ENCODE measurements at regions of chr5 and their contacts with region 1.

Region 1: GRCh38 chr5:159915904-159916840 is at the start of gene ADRA1B:
- DNase-seq: peak; percentile 86 to 94
- ATAC-seq: peak; percentile 87
- H3K4me3 ChIP-seq: peak within 1 kb of the TSS; percentile 51 to 80
- H3K27ac ChIP-seq: peak within 1 kb of the TSS; percentile 94 to 96
- H3K4me1 ChIP-seq: peaks cover 9 to 11% of the 10 kb centered on the region in 2 donors
- H3K27me3 ChIP-seq: no peaks in the 10 kb centered on the region
- total RNA-seq, gene ADRA1B: 5.4 to 16.0 TPM

Region 2: GRCh38 chr5:159003037-159004030 is 912.8 kb before region 1 on chr5:
- intact Hi-C with region 1: no loop called
- DNase-seq: no peak
- ATAC-seq: peak; percentile 53
- H3K4me3 ChIP-seq: no peak overlapping the region
- H3K27ac ChIP-seq: no peak overlapping the region
- H3K4me1 ChIP-seq: peaks cover 4 to 23% of the 10 kb centered on the region in 2 donors
- H3K27me3 ChIP-seq: no peaks in the 10 kb centered on the region

Region 3: DNA sequence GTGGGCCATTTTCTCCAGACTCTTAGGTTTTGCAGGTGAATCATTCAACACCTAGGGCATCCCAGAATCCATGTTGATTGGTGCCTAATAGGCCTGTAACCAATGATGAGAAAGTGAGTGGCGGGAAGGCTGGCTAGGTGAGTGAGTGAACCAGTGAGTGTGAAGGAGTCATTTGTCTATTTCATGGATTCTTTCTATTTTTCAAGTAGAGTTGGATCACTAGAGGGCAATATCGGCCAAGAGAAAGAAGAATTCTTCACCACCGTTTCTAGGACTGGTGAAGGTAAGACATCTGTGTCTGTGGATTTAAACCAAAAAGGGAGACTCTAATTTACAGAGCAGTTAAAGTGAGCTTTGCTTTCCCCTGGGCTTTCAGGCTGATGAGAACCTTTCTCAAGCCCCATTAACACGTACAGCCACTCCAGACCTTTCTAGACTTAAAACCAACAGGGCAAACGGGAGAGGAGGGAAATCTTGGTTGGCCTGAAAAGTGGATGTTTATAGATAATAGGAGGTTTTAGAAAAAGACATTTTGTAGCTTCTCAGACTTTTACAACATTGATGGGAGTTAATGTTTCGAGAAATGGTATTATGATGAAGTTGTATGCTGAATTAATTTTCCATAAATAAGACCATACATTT is 471.6 kb before region 1 on chr5:
- intact Hi-C with region 1: loop called in 1 of 2 experiments (anchors 5 kb)
- DNase-seq: no peak
- ATAC-seq: no peak
- H3K4me3 ChIP-seq: no peak overlapping the region
- H3K27ac ChIP-seq: no peak overlapping the region
- H3K4me1 ChIP-seq: no peaks in the 10 kb centered on the region
- H3K27me3 ChIP-seq: no peaks in the 10 kb centered on the region

Region 4: DNA sequence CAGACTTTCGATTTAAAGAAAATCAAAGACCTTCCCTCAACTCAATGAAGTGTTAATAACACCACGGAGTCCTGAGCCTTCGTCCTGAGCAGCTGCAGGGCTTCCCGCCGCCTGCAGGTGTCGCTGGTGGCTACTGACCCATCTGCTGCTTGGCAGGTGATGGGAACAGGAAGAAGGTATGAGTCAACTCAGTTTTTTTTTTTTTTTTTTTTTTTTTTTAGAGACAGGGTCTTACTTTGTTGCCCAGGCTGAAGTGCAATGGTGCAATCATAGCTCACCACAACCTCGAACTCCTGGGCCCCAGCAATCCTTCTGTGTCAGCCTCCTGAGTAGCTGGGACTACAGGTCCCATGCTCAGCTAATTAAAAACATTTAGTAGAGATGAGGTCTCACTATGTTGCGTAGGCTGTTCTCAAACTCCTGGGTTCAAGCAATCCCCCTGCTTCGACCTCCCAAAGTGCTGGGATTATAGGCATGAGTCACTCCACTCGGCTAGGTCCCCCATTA is 400.2 kb before region 1 on chr5:
- intact Hi-C with region 1: loop called (anchors 2 to 5 kb)
- DNase-seq: peak; percentile 70 to 90
- ATAC-seq: peak; percentile 68
- H3K4me3 ChIP-seq: no peak overlapping the region
- H3K27ac ChIP-seq: peak overlapping the region in 1 of 2 donors; percentile 11
- H3K4me1 ChIP-seq: peaks cover 3 to 4% of the 10 kb centered on the region in 2 donors
- H3K27me3 ChIP-seq: no peaks in the 10 kb centered on the region

Region 5: GRCh38 chr5:159752622-159753275 is 163.4 kb before region 1 on chr5:
- intact Hi-C with region 1: loop called in 1 of 2 experiments (anchors 5 kb)
- DNase-seq: peak in 1 of 2 donors; percentile 66
- ATAC-seq: peak; percentile 82
- H3K4me3 ChIP-seq: no peak overlapping the region
- H3K27ac ChIP-seq: peak overlapping the region; percentile 93 to 98
- H3K4me1 ChIP-seq: peaks cover 0 to 7% of the 10 kb centered on the region in 2 donors
- H3K27me3 ChIP-seq: no peaks in the 10 kb centered on the region

Region 6: GRCh38 chr5:159786901-159787691 is 129.1 kb before region 1 on chr5:
- intact Hi-C with region 1: loop called in 1 of 2 experiments (anchors 5 kb)
- DNase-seq: peak; percentile 49 to 89
- ATAC-seq: peak; percentile 86
- H3K4me3 ChIP-seq: no peak overlapping the region
- H3K27ac ChIP-seq: peak overlapping the region; percentile 44 to 99
- H3K4me1 ChIP-seq: peaks cover 3 to 4% of the 10 kb centered on the region in 2 donors
- H3K27me3 ChIP-seq: no peaks in the 10 kb centered on the region

Measured in aorta (tissue), 5 donors.